Mucosa of descending colon (tissue), 3 donors: ENCODE measurements at regions of chr2 and their contacts with region 1.

Region 1: GRCh38 chr2:112884869-112885505 is 26.0 kb upstream of the IL37 start:
- DNase-seq: peak; percentile 57 to 83 (median 76)
- ATAC-seq: peak; percentile 94
- H3K4me3 ChIP-seq: no peak overlapping the region
- H3K4me1 ChIP-seq: peaks cover 3% of the 10 kb centered on the region
- CTCF ChIP-seq: peak; percentile 84

Region 2: GRCh38 chr2:112516801-112517200 is 368.2 kb before region 1 on chr2:
- intact Hi-C with region 1: no loop called
- DNase-seq: no peak
- ATAC-seq: no peak
- H3K4me3 ChIP-seq: no peak overlapping the region
- H3K4me1 ChIP-seq: no peaks in the 10 kb centered on the region
- CTCF ChIP-seq: no peak

Region 3: GRCh38 chr2:112529757-112530156 is 355.2 kb before region 1 on chr2:
- intact Hi-C with region 1: no loop called
- DNase-seq: no peak
- ATAC-seq: no peak
- H3K4me3 ChIP-seq: no peak overlapping the region
- H3K4me1 ChIP-seq: no peaks in the 10 kb centered on the region
- CTCF ChIP-seq: no peak

Region 4: DNA sequence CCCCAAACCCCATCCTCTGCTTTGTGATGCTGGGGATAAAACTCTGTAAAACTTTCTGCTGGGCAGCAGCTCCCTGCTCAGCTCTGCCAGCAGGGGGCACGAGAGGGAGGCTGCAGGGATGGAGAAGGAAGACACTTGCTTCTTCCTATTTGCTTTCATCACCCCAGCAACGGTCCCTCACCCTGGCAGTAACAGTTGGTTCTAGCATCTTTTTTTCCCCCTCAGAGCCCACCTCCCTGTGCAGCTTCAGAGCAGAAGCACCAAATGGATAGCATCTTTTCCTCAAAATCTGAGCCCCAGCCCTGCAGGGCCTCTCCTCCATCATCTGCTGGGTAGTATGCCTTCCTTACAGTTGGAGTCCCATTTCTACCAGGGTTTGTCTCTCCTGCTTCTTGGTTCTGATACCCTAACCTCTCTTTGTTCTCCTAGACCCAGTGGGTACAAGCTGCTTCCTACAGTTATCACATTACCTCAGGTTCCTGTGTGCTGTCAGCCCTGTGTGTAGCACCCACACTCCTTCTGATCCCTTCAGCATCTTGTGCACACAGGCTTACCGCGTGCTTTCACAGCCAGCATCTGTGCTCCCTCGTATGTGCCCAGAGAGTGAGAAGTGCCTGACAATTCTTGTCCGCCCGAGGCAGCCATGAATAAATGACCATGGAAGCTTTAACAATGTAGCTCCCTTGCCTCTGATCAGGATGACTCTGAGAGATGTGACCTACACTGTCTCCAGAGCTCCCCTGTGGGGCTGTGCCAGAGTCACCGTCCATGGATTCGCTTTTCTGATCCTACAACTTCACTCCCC is 135.0 kb before region 1 on chr2:
- intact Hi-C with region 1: loop called in 1 of 2 experiments (anchors 5 kb)
- DNase-seq: peak; percentile 76 to 90 (median 79)
- ATAC-seq: peak; percentile 97
- H3K4me3 ChIP-seq: no peak overlapping the region
- H3K4me1 ChIP-seq: peaks cover 6% of the 10 kb centered on the region
- CTCF ChIP-seq: peak; percentile 93

Region 5: GRCh38 chr2:112941753-112942658 is 57.0 kb after region 1 on chr2:
- intact Hi-C with region 1: loop called in 1 of 2 experiments (anchors 10 kb)
- DNase-seq: peak; percentile 81 to 94 (median 89)
- ATAC-seq: peak; percentile 99
- H3K4me3 ChIP-seq: no peak overlapping the region
- H3K4me1 ChIP-seq: no peaks in the 10 kb centered on the region
- CTCF ChIP-seq: peak; percentile 74

Region 6: DNA sequence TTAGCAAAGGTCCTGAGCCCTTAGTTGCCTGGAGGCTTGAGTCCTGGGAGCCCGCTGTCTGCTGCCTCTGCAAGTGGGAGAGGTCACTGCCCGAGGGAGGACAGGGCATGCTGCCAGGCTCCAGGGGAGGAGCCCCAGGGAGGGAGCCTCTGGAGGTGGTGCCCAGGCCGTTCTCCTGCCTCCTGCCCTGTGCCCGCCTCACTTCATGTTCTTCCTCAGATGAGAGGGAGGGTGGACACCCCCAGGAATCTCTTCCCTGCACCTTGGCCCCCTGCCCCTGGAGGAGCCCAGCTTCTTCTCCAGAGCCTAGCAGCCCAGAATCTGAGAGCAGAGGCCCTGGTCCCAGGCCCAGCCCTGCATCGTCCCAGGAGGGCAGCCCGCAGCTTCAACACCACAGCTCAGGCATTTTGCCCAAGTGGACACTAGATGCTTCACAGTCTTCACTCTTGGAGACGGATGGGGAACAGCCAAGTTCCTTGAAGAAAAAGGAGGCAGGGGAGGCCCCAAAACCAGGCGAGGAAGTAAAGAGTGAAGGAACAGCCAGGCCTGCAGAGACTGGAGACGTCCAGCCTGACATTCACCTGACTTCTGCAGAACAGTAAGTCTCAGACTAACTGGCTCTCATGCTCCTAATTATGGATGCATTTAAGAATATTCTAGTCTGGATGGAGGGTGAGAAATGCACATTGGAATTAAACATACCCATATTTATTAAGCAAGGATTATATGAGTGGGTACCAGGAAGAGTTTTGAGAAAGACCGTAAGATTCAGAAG is 300.9 kb after region 1 on chr2:
- intact Hi-C with region 1: no loop called
- DNase-seq: peak in 1 of 3 donors; percentile 53
- ATAC-seq: peak; percentile 69
- H3K4me3 ChIP-seq: no peak overlapping the region
- H3K4me1 ChIP-seq: peaks cover 10% of the 10 kb centered on the region
- CTCF ChIP-seq: no peak